ENCODE measurements at regions of chr11 and their contacts with region 1.

Region 1: DNA sequence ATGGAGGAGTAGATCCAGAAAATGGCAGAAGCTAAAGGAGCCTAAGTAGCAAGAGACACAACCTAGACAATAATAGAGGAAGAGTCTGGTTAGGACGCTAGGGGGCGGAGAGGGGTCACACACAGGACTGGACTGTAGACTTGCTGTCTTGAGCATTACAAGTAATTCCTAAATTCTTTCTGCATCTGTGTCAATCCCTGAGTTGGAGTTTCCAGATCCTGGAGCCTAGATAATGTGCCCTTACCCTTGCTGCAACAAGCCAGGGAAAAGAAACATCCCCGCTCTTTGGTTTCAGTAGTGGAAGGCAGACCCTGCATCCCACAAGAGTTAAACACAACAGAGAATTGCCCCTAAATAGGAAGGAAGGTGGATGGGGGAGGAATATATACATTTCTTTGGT is 14.9 kb upstream of the CCDC73 start:
- DNase-seq: peak; percentile 48
- H3K4me3 ChIP-seq: no peak overlapping the region
- H3K27ac ChIP-seq: no peak overlapping the region
- H3K27me3 ChIP-seq: peaks cover 6% of the 10 kb centered on the region
- CTCF ChIP-seq: peak; percentile 90

Region 2: DNA sequence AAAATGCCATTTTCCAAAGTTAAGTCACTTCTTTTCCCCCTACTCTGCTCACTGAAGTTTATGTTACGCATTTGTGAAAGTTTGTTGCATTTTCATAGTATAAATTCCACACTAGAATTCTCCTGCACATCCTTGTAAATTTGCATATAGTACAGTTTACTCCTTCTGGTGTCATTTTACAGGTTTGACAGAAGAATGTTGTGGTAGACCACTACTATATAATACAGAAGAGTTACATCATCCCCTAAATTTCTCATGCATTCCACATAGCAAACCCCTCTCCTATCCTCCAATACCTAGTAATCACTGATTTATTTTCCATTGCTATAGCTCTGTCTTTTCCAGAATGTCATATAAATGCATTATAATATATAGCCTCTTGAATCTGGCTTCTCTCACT is 79.3 kb before region 1 on chr11:
- CTCF ChIA-PET with region 1: no interaction called
- POLR2A ChIA-PET with region 1: no interaction called
- DNase-seq: no peak
- H3K4me3 ChIP-seq: no peak overlapping the region
- H3K27ac ChIP-seq: no peak overlapping the region
- H3K27me3 ChIP-seq: no peaks in the 10 kb centered on the region
- CTCF ChIP-seq: no peak

Region 3: GRCh38 chr11:32829680-32830412 is 20.5 kb after region 1 on chr11 and contains the start of gene PRRG4:
- CTCF ChIA-PET with region 1: interaction called, 11 read pairs
- POLR2A ChIA-PET with region 1: no interaction called
- DNase-seq: no peak
- H3K4me3 ChIP-seq: peak within 1 kb of the TSS; percentile 61
- H3K27ac ChIP-seq: no peak within 1 kb of the TSS
- H3K27me3 ChIP-seq: peaks cover 32% of the 10 kb centered on the region
- CTCF ChIP-seq: no peak
- polyA plus RNA-seq, gene PRRG4: not detected in 2 replicates

Region 4: GRCh38 chr11:32960553-32961164 is 151.3 kb after region 1 on chr11:
- CTCF ChIA-PET with region 1: interaction called, 10 read pairs
- POLR2A ChIA-PET with region 1: no interaction called
- DNase-seq: peak; percentile 27
- H3K4me3 ChIP-seq: no peak overlapping the region
- H3K27ac ChIP-seq: no peak overlapping the region
- H3K27me3 ChIP-seq: no peaks in the 10 kb centered on the region
- CTCF ChIP-seq: peak; percentile 68